ENCODE measurements at regions of chr15 and their contacts with region 1.

Region 1: DNA sequence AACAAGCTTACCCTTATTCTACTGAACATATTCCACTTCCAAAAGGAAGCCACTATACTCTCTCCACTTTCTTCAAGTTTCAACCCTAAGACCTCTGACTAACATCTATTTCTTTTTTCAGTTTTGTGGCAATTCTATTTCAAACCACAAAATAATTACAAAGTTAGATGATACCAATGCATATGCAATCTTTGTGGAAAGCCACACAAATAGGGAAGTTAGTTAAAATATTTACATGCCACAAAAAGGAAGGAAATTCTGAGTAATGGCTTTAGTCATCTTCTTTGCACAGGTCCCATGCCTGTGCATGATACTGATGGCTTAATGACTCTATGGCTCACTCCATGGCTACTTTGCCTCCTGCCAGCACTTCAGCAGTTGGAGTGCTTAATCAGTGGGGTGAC is 57.0 kb upstream of the MCTP2 start:
- H3K4me3 Mint-ChIP-seq: peak overlapping the region; percentile 22
- H3K27ac Mint-ChIP-seq: peak overlapping the region; percentile 78
- H3K4me1 Mint-ChIP-seq: peaks cover 49% of the 10 kb centered on the region
- H3K27me3 Mint-ChIP-seq: peaks cover 38% of the 10 kb centered on the region

Region 2: GRCh38 chr15:94230956-94231722 is 56.7 kb after region 1 on chr15 and contains the start of gene MCTP2:
- intact Hi-C with region 1: loop called (anchors 5 kb)
- H3K4me3 Mint-ChIP-seq: peak within 1 kb of the TSS; percentile 76
- H3K27ac Mint-ChIP-seq: peak within 1 kb of the TSS; percentile 65
- H3K4me1 Mint-ChIP-seq: peaks cover 47% of the 10 kb centered on the region
- H3K27me3 Mint-ChIP-seq: peaks cover 66% of the 10 kb centered on the region

Region 3: DNA sequence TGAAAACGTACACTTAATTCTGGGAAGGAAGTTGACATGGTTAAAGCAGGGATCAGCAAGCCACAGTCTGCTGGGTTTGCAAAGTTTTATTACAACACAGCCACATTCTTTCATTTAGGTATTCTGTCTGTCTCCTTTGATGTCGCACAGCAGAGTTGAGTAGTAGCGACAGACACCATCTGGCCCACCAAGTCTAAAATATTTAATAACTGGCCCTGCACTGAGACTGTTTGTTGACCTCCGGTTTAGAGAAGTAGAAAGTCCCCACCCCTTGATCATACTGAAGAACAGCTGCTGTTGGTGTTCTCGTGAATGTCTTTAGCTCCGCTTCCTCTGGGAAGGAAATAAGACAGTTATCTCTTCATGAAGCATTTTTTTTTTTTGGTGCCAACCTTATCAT is 123.2 kb after region 1 on chr15:
- intact Hi-C with region 1: loop called (anchors 10 kb)
- H3K4me3 Mint-ChIP-seq: peak overlapping the region; percentile 17
- H3K27ac Mint-ChIP-seq: peak overlapping the region; percentile 66
- H3K4me1 Mint-ChIP-seq: peaks cover 33% of the 10 kb centered on the region
- H3K27me3 Mint-ChIP-seq: peaks cover 3% of the 10 kb centered on the region

Measured in dendritic cell treated with granulocyte-macrophage colony-stimulating factor and Interleukin-4, amounts not matched to agents 40 ng/mL and 50 ng/mL, for 4 days (primary cell).